Breast epithelium (tissue), 4 donors: ENCODE measurements at regions of chr21 and their contacts with region 1.

Region 1: DNA sequence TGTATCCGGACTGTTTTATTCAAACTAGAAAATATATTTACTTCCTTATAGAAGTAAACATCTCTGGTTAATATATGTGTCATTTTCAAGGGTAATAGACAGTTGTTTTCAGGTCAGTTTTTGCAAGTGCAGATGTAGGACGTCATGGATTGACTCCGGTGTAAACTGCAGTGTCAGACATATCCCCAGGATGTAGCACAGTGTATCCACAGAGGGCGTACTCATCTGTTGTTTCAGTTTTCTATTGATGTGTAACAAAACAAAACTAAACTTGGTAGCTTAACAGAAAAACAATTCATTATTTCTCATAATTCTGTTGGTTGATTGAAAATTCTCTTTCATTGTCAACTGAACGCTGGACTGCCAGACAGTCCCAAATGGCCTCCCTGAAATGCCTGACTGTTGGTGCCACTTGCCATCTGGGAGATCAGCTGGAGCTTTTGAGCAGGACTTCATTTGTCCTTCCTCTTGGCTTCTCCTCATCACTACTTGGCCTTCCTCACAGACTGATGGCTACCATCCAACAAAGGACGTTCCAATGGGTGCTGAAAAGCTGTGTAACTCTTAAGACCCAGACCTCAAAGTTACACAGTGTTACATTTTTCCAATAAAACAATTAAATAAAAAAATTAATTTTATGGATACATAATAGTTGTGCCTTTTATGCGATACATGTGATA is 181.6 kb downstream of the NCAM2 start:
- DNase-seq: no peak
- H3K4me3 ChIP-seq: no peak overlapping the region
- H3K27ac ChIP-seq: no peak overlapping the region
- H3K4me1 ChIP-seq: no peaks in the 10 kb centered on the region
- H3K27me3 ChIP-seq: no peaks in the 10 kb centered on the region
- CTCF ChIP-seq: no peak
- POLR2A ChIP-seq: no peak

Region 2: GRCh38 chr21:21232320-21232719 is 52.6 kb after region 1 on chr21:
- intact Hi-C with region 1: no loop called
- DNase-seq: no peak
- H3K4me3 ChIP-seq: no peak overlapping the region
- H3K27ac ChIP-seq: no peak overlapping the region
- H3K4me1 ChIP-seq: no peaks in the 10 kb centered on the region
- H3K27me3 ChIP-seq: no peaks in the 10 kb centered on the region
- CTCF ChIP-seq: peak in 1 of 3 donors; percentile 34
- POLR2A ChIP-seq: no peak

Region 3: GRCh38 chr21:21262048-21262447 is 82.3 kb after region 1 on chr21:
- intact Hi-C with region 1: no loop called
- DNase-seq: no peak
- H3K4me3 ChIP-seq: no peak overlapping the region
- H3K27ac ChIP-seq: no peak overlapping the region
- H3K4me1 ChIP-seq: no peaks in the 10 kb centered on the region
- H3K27me3 ChIP-seq: no peaks in the 10 kb centered on the region
- CTCF ChIP-seq: no peak
- POLR2A ChIP-seq: no peak

Region 4: GRCh38 chr21:21845901-21846300 is 666.1 kb after region 1 on chr21:
- intact Hi-C with region 1: loop called (anchors 5 kb)
- DNase-seq: no peak
- H3K4me3 ChIP-seq: no peak overlapping the region
- H3K27ac ChIP-seq: no peak overlapping the region
- H3K4me1 ChIP-seq: no peaks in the 10 kb centered on the region
- H3K27me3 ChIP-seq: no peaks in the 10 kb centered on the region
- CTCF ChIP-seq: no peak
- POLR2A ChIP-seq: no peak